Calu3 (cell line): ENCODE measurements at regions of chr13 and their contacts with region 1.

Region 1: DNA sequence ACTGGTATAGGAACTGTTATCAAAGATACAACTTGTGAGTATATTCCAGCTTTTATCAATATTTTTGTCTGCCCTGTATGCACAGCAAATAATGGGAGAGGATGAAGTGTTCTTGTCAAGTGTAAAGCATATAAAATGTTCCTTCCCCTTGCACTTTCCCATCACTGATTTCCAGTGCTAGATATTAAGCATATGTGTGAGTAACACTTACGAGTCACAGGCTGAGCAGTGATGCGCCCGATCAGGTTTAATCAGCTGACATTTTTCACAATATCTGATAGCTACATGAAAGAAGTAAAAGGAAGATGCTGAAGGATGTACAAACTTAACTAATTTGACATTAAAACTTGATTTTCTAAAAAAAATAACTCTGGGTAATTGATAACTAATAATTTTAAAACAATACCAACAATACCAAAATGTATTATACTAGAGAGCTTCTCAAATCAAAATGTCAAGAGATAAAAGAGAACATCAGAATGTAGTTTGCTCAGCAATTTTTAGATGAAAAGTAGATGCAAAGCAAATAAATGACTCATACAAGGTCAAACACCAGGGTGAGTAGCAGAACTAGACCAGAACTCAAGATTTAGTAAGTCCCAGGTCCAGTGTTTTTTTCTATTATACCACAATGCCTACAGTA is 56.4 kb downstream of the ZDHHC20 start:
- DNase-seq: no peak
- H3K4me3 Mint-ChIP-seq: no peak overlapping the region
- H3K27ac Mint-ChIP-seq: no peak overlapping the region
- H3K4me1 Mint-ChIP-seq: no peaks in the 10 kb centered on the region
- H3K27me3 Mint-ChIP-seq: no peaks in the 10 kb centered on the region
- CTCF ChIP-seq: no peak

Region 2: GRCh38 chr13:21435710-21436151 is 33.0 kb after region 1 on chr13:
- CTCF ChIA-PET with region 1: no interaction called
- intact Hi-C with region 1: loop called (anchors 5 kb)
- DNase-seq: peak; percentile 54
- H3K4me3 Mint-ChIP-seq: no peak overlapping the region
- H3K27ac Mint-ChIP-seq: peak overlapping the region; percentile 65
- H3K4me1 Mint-ChIP-seq: peaks cover 21% of the 10 kb centered on the region
- H3K27me3 Mint-ChIP-seq: no peaks in the 10 kb centered on the region
- CTCF ChIP-seq: no peak

Region 3: GRCh38 chr13:21458813-21459701 is 56.4 kb after region 1 on chr13 and contains the start of gene ZDHHC20:
- CTCF ChIA-PET with region 1: no interaction called
- intact Hi-C with region 1: loop called (anchors 5 kb)
- DNase-seq: peak; percentile 91
- H3K4me3 Mint-ChIP-seq: peak within 1 kb of the TSS; percentile 86
- H3K27ac Mint-ChIP-seq: peak within 1 kb of the TSS; percentile 39
- H3K4me1 Mint-ChIP-seq: peaks cover 15% of the 10 kb centered on the region
- H3K27me3 Mint-ChIP-seq: no peaks in the 10 kb centered on the region
- CTCF ChIP-seq: no peak
- total RNA-seq, gene ZDHHC20: 88.9 and 90.6 TPM in 2 replicates